Activated T-helper 2 cell treated with anti-CD3 and anti-CD28 coated beads, Interferon-gamma antibody, Interleukin-2, Interleukin-4, amounts not matched to agents 10 μg/mL and 5 μg/mL and 100 μg/mL, durations not matched to agents 14 hours and 24 hours and 36 hours (primary cell): ENCODE measurements at regions of chr9 and their contacts with region 1.

Region 1: DNA sequence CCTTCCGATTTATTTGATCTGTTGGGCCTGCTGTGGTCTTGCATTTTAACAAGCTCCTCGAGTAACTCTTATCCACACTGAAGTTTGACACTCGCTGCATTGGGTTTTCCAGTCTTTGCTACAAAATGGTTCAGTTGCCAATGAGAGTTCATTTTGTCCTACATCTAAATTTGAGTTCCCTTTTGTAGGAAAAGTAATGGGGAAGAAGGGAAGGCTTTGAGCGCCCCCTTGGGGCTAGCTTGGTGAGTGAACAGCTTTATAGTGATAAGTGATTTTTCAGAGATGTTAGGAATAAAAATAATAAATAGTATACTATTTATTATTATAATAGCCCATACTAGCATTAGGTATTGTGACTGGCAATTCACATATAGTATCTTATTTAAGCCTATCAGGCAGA is 89.9 kb upstream of the GNAQ start:
- DNase-seq: peak; percentile 37
- H3K4me3 Mint-ChIP-seq: no peak overlapping the region
- H3K27ac Mint-ChIP-seq: no peak overlapping the region
- H3K4me1 Mint-ChIP-seq: peaks cover 31% of the 10 kb centered on the region
- H3K27me3 Mint-ChIP-seq: peaks cover 13% of the 10 kb centered on the region

Region 2: GRCh38 chr9:77841739-77842386 is 279.6 kb before region 1 on chr9:
- intact Hi-C with region 1: loop called (anchors 5 kb)
- DNase-seq: no peak
- H3K4me3 Mint-ChIP-seq: no peak overlapping the region
- H3K27ac Mint-ChIP-seq: peak overlapping the region; percentile 42
- H3K4me1 Mint-ChIP-seq: peaks cover 37% of the 10 kb centered on the region
- H3K27me3 Mint-ChIP-seq: no peaks in the 10 kb centered on the region

Region 3: GRCh38 chr9:77899679-77900354 is 221.7 kb before region 1 on chr9:
- intact Hi-C with region 1: loop called (anchors 10 kb)
- DNase-seq: no peak
- H3K4me3 Mint-ChIP-seq: no peak overlapping the region
- H3K27ac Mint-ChIP-seq: no peak overlapping the region
- H3K4me1 Mint-ChIP-seq: peaks cover 61% of the 10 kb centered on the region
- H3K27me3 Mint-ChIP-seq: no peaks in the 10 kb centered on the region

Region 4: GRCh38 chr9:78073722-78074121 is 47.8 kb before region 1 on chr9:
- intact Hi-C with region 1: loop called (anchors 2 kb)
- DNase-seq: no peak
- H3K4me3 Mint-ChIP-seq: peak overlapping the region; percentile 7
- H3K27ac Mint-ChIP-seq: peak overlapping the region; percentile 10
- H3K4me1 Mint-ChIP-seq: peaks cover 47% of the 10 kb centered on the region
- H3K27me3 Mint-ChIP-seq: no peaks in the 10 kb centered on the region

Region 5: DNA sequence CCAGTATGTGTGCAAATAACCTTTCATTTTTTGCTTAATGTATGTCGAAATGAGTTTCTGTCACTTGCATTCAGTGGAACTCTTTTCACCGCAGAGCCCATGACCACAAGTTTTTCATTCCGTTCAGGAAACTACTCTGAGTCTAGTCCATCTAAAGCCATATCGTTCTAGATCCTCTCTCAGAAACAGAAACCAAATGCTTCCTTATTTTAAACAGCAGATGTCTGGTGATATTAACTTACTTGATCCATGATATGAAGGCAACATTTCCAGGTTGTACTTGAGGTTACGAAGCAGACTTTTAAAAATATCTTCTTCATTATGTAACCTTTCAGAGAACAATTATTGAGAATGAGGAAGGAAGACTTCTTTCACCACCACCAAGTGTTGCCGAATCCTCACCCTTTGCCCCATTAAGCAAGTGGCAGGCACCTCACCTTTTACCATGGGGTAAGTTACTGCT is 17.5 kb before region 1 on chr9:
- intact Hi-C with region 1: loop called (anchors 1 kb)
- DNase-seq: peak; percentile 54
- H3K4me3 Mint-ChIP-seq: peak overlapping the region; percentile 22
- H3K27ac Mint-ChIP-seq: no peak overlapping the region
- H3K4me1 Mint-ChIP-seq: peaks cover 49% of the 10 kb centered on the region
- H3K27me3 Mint-ChIP-seq: no peaks in the 10 kb centered on the region

Region 6: DNA sequence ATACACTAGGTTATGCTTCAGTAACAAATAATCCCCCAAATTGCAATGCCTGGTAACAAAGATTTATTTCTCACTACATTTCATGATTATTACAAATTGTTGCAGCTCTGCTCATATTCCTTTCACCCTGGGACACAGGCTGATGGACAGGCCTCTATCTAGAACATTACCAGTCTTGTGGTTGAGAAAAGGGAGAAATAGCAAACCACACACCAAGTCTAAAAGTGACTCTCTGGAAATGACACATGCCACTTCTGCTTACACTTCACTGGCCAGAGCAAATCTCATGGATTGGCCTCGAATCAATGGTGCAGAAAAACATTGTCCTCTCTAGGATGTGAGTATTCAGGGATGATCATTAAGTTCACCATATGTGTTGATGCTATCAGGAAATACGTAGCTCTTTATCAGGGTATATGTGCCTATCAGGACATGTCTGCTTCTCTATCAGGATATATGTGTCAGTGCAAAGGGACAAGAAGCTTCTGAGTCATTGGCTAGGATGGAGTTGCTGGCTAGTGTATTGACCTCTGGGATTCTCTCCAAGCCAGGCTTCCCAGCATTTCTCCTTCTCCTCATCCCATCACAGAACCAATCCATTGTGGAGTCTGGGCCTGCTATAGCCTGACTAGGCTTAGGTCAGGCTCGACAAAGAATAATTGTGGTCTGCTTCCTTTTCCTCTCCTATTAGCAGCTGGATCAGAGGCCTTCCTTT is 23.3 kb after region 1 on chr9:
- intact Hi-C with region 1: no loop called
- DNase-seq: no peak
- H3K4me3 Mint-ChIP-seq: no peak overlapping the region
- H3K27ac Mint-ChIP-seq: no peak overlapping the region
- H3K4me1 Mint-ChIP-seq: peaks cover 21% of the 10 kb centered on the region
- H3K27me3 Mint-ChIP-seq: no peaks in the 10 kb centered on the region